Heart left ventricle (tissue), 16 donors: ENCODE measurements at regions of chr1 and their contacts with region 1.

Region 1: GRCh38 chr1:32964461-32965250 is at the start of gene RNF19B:
- DNase-seq: peak; percentile 95 to 98 (median 96)
- ATAC-seq: peak; percentile 98 to 99 (median 99)
- H3K4me3 ChIP-seq: peak within 1 kb of the TSS; percentile 63 to 99 (median 92)
- H3K27ac ChIP-seq: peak within 1 kb of the TSS; percentile 75 to 97 (median 93)
- H3K4me1 ChIP-seq: peaks cover 0 to 41% (median 30%) of the 10 kb centered on the region in 12 donors
- H3K27me3 ChIP-seq: no peaks in the 10 kb centered on the region
- CTCF ChIP-seq: peak in 5 of 12 donors; percentile 2 to 52 (median 23)
- POLR2A ChIP-seq: peak; percentile 88 to 99
- total RNA-seq, gene RNF19B: 10.0 to 42.5 (median 15.2) TPM

Region 2: DNA sequence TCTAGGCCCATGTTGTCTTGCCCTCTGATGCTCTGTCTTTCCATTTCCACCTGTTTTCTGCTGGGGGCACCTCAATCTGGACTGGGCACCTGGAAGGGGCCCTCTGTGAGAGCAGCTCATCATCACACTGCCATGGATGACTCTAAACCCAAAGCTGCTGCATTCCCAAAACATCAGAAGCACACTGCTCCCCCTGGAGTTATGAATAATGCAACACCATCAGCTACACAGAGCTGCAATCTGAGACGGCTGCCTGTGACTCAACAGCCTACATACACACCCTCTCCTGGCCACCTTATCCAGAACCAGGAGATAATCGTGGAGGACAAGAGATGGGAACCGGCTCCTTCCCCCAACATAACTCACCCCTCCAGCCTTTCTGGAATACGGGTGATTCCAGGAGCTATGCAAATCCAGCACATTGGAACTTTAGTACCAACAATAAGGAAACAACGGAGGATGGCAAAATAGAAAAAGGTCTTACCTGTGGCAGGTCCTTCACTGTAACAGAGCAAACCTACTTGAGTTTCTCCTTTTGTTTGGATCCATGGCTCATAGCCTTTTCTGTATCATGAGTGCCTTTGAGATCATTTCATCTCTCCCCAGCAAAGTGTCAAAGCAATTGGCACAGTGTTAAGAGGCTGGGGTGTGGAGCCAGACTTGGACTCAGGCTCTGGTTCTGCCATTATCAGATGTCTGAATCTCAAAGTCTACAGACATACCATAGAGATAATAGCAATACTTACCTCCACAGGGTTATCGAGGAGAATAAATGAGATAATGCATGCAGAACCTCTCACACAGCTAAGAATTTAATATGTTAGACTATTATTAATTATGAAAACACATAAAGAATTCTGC is 42.8 kb after region 1 on chr1:
- intact Hi-C with region 1: loop called in 4 of 10 experiments (anchors 2 to 10 kb)
- DNase-seq: peak in 3 of 5 donors; percentile 38 to 59 (median 50)
- ATAC-seq: peak; percentile 43 to 80 (median 67)
- H3K4me3 ChIP-seq: no peak overlapping the region
- H3K27ac ChIP-seq: peak overlapping the region in 3 of 12 donors; percentile 27 to 91 (median 84)
- H3K4me1 ChIP-seq: peaks cover 10 to 85% (median 62%) of the 10 kb centered on the region in 12 donors
- H3K27me3 ChIP-seq: no peaks in the 10 kb centered on the region
- CTCF ChIP-seq: peak in 11 of 12 donors; percentile 13 to 52 (median 33)
- POLR2A ChIP-seq: no peak

Region 3: GRCh38 chr1:33036526-33037503 is 72.2 kb after region 1 on chr1 and contains the start of gene AK2:
- intact Hi-C with region 1: loop called in 4 of 10 experiments (anchors 2 to 5 kb)
- DNase-seq: peak; percentile 97 to 98 (median 98)
- ATAC-seq: peak; percentile 100
- H3K4me3 ChIP-seq: peak within 1 kb of the TSS; percentile 70 to 99 (median 89)
- H3K27ac ChIP-seq: peak within 1 kb of the TSS in 11 of 12 donors; percentile 74 to 94 (median 83)
- H3K4me1 ChIP-seq: peaks cover 6 to 48% (median 26%) of the 10 kb centered on the region in 12 donors
- H3K27me3 ChIP-seq: no peaks in the 10 kb centered on the region
- CTCF ChIP-seq: no peak
- POLR2A ChIP-seq: peak in 1 of 2 donors; percentile 82
- total RNA-seq, gene AK2: 101 to 189 (median 120) TPM